Psoas muscle (tissue), 8 donors: ENCODE measurements at regions of chr16 and their contacts with region 1.

Region 1: GRCh38 chr16:9008601-9009260 is 45.0 kb upstream of the USP7 start:
- DNase-seq: peak; percentile 79 to 82
- ATAC-seq: peak; percentile 90 to 98 (median 94)
- H3K4me3 ChIP-seq: peak overlapping the region; percentile 56
- H3K27ac ChIP-seq: no peak overlapping the region
- H3K4me1 ChIP-seq: no peaks in the 10 kb centered on the region
- H3K27me3 ChIP-seq: no peaks in the 10 kb centered on the region
- CTCF ChIP-seq: peak; percentile 87

Region 2: GRCh38 chr16:8567750-8568617 is 440.7 kb before region 1 on chr16:
- intact Hi-C with region 1: loop called in 1 of 2 experiments (anchors 10 kb)
- DNase-seq: peak; percentile 61 to 70
- ATAC-seq: peak; percentile 67 to 88 (median 84)
- H3K4me3 ChIP-seq: no peak overlapping the region
- H3K27ac ChIP-seq: no peak overlapping the region
- H3K4me1 ChIP-seq: no peaks in the 10 kb centered on the region
- H3K27me3 ChIP-seq: peaks cover 0 to 29% (median 5%) of the 10 kb centered on the region in 3 donors
- CTCF ChIP-seq: peak; percentile 96

Region 3: DNA sequence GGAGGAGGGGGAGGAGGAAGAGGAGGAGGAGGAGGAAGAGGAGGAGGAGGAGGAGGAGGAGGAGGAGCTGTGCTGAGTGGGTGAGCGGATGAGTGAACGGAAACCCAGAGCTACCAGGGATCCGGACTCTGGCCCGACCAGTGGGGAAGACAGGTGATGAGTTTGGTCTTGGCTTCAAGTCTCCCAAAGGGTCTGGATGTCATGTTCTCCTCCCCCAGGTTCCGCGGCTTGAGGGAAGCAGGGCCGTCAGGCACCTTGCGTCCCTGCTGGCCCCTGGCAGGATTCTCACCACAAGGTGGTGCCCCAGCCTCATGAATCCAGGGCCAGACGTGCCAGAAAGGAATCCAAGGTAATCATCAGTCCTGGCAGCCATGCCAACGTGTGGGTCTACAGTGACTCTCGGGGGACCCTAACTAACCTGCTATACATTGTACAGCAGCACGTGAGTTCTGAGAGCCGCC is 347.9 kb before region 1 on chr16:
- intact Hi-C with region 1: loop called in 1 of 2 experiments (anchors 2 kb)
- DNase-seq: peak; percentile 53 to 74
- ATAC-seq: peak; percentile 73 to 90 (median 83)
- H3K4me3 ChIP-seq: no peak overlapping the region
- H3K27ac ChIP-seq: no peak overlapping the region
- H3K4me1 ChIP-seq: no peaks in the 10 kb centered on the region
- H3K27me3 ChIP-seq: no peaks in the 10 kb centered on the region
- CTCF ChIP-seq: peak; percentile 62

Region 4: DNA sequence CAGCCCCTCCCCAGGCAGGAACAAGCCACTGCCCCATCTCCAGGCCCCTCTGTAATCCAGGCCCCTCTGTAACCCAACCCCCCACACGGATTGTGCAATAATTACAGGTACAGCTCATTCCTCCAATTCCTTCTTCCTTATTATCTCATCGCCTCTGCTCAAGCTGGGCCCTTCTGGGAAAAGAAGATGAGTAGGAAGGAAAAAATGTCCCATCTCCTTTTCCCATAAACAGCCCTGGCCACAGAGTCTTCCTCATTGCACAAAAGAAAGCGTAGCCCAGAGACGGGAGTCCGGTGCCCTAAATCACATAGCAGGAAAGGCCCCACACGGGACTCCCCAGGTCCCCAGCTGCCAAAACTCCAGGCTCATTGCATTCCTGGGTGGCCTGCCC is 130.2 kb before region 1 on chr16:
- intact Hi-C with region 1: no loop called
- DNase-seq: peak in 1 of 2 donors; percentile 45
- ATAC-seq: peak in 2 of 4 donors; percentile 12 to 35
- H3K4me3 ChIP-seq: no peak overlapping the region
- H3K27ac ChIP-seq: no peak overlapping the region
- H3K4me1 ChIP-seq: no peaks in the 10 kb centered on the region
- H3K27me3 ChIP-seq: peaks cover 0 to 14% (median 0%) of the 10 kb centered on the region in 3 donors
- CTCF ChIP-seq: no peak

Region 5: DNA sequence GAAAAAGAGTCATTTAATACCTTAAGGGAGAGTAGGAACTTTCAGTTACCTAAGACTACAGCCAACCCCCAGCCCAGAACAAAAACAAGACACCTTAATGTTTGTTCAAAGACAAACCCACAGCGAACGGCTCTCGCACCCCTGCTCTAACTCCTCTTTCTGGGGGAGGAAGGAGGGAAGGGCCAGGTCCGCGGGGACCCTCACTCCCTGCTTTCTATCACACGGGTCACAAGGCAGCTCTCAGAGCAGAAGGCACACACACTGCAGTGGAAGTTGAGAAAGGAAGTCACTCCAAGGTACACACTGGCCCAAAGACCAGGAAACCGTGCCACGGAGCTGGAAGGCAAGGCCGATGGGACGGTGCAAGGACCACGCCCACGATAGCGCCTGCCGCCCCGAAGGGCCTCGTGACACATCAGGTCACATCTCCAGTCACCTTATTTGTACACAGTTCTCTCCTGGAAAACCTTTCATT is 116.6 kb before region 1 on chr16:
- intact Hi-C with region 1: loop called in 1 of 2 experiments (anchors 5 kb)
- DNase-seq: peak; percentile 53 to 70
- ATAC-seq: peak in 3 of 4 donors; percentile 17 to 45 (median 30)
- H3K4me3 ChIP-seq: no peak overlapping the region
- H3K27ac ChIP-seq: peak overlapping the region; percentile 30
- H3K4me1 ChIP-seq: peaks cover 27% of the 10 kb centered on the region
- H3K27me3 ChIP-seq: no peaks in the 10 kb centered on the region
- CTCF ChIP-seq: no peak

Region 6: DNA sequence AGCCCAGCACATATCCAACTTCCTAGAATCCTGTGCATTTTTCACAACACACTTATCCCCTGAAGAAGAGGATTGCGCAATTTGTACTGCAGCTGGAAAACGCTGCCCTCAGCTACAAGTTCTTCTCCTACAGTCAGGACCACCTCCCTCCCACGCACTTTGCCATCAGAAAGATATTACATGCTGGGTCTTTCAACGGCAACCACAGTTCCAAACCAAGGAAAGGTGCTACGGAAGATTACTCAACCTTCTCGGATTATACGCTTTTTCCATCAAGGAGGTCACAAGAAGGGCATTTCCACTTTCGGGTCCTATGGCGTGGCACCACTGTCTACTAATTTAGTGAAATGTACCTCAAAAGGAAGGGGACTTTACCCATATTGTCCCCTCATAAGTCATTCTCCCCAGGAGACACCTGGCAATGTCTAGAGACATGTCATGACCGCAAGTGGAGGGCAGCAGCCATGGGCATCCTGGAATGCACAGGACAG is 80.2 kb before region 1 on chr16:
- intact Hi-C with region 1: loop called in 1 of 2 experiments (anchors 10 kb)
- DNase-seq: no peak
- ATAC-seq: peak in 2 of 4 donors; percentile 18 to 27
- H3K4me3 ChIP-seq: no peak overlapping the region
- H3K27ac ChIP-seq: no peak overlapping the region
- H3K4me1 ChIP-seq: peaks cover 32% of the 10 kb centered on the region
- H3K27me3 ChIP-seq: no peaks in the 10 kb centered on the region
- CTCF ChIP-seq: no peak

Region 7: GRCh38 chr16:9061358-9061813 is 52.7 kb after region 1 on chr16:
- intact Hi-C with region 1: no loop called
- DNase-seq: peak in 1 of 2 donors; percentile 62
- ATAC-seq: peak; percentile 95 to 98 (median 96)
- H3K4me3 ChIP-seq: no peak overlapping the region
- H3K27ac ChIP-seq: peak overlapping the region; percentile 73
- H3K4me1 ChIP-seq: peaks cover 24% of the 10 kb centered on the region
- H3K27me3 ChIP-seq: no peaks in the 10 kb centered on the region
- CTCF ChIP-seq: no peak